Activated CD4-positive, alpha-beta T cell treated with anti-CD3 and anti-CD28 coated beads for 36 hours (primary cell): ENCODE measurements at regions of chr13 and their contacts with region 1.

Region 1: DNA sequence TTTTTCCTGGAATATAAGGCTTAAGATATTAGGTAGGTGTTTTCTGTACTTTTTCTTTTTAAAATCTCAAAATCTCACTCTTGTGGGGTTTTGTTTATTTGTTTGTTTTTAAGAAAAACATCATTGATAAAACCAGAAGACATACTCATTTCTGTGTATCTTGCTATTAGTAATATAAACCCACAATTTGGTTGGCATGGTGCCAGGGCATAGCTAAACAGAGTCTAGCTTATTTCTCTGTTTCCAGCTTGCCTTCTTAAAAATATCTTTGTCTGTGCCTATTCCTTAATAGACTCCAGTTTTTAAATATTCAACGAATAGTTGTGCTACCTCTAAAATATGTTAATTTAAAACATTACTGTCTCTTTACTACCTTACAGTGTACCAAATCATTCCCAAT is 1121.9 kb upstream of the PCDH20 start:
- DNase-seq: no peak
- ATAC-seq: no peak
- H3K4me3 Mint-ChIP-seq: no peak overlapping the region
- H3K27ac Mint-ChIP-seq: no peak overlapping the region
- H3K4me1 Mint-ChIP-seq: no peaks in the 10 kb centered on the region
- H3K27me3 Mint-ChIP-seq: no peaks in the 10 kb centered on the region

Region 2: DNA sequence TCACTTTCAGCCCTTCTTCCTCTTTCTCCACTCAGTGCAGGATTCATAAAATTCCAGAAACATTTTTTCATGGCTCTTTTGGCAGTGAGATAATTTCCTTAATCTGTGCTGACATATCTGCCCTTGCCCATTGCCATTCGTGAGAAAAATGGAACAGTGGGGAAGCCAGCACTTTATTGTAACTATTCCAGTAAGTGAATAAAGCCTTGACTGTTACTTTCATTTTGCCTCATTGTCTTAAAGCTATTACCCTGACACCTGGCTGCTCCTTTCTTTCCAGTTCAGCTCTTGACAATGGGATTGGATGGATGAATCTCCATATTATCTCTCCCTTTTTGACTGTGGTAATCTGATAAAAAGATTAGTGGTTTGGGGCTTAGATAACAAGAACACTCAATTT is 53.8 kb before region 1 on chr13:
- CTCF ChIA-PET with region 1: no interaction called
- POLR2A ChIA-PET with region 1: no interaction called
- intact Hi-C with region 1: loop called in 1 of 2 experiments (anchors 1 kb)
- DNase-seq: no peak
- ATAC-seq: no peak
- H3K4me3 Mint-ChIP-seq: no peak overlapping the region
- H3K27ac Mint-ChIP-seq: no peak overlapping the region
- H3K4me1 Mint-ChIP-seq: no peaks in the 10 kb centered on the region
- H3K27me3 Mint-ChIP-seq: no peaks in the 10 kb centered on the region